Activated T-helper 2 cell treated with anti-CD3 and anti-CD28 coated beads, Interferon-gamma antibody, Interleukin-2, Interleukin-4, amounts not matched to agents 10 μg/mL and 5 μg/mL and 100 μg/mL, durations not matched to agents 14 hours and 24 hours and 36 hours (primary cell): ENCODE measurements at regions of chr6 and their contacts with region 1.

Region 1: GRCh38 chr6:45922728-45923351 is 92.8 kb downstream of the CLIC5 start:
- DNase-seq: peak; percentile 58
- H3K4me3 Mint-ChIP-seq: peak overlapping the region; percentile 53
- H3K27ac Mint-ChIP-seq: peak overlapping the region; percentile 94
- H3K4me1 Mint-ChIP-seq: peaks cover 68% of the 10 kb centered on the region
- H3K27me3 Mint-ChIP-seq: no peaks in the 10 kb centered on the region

Region 2: DNA sequence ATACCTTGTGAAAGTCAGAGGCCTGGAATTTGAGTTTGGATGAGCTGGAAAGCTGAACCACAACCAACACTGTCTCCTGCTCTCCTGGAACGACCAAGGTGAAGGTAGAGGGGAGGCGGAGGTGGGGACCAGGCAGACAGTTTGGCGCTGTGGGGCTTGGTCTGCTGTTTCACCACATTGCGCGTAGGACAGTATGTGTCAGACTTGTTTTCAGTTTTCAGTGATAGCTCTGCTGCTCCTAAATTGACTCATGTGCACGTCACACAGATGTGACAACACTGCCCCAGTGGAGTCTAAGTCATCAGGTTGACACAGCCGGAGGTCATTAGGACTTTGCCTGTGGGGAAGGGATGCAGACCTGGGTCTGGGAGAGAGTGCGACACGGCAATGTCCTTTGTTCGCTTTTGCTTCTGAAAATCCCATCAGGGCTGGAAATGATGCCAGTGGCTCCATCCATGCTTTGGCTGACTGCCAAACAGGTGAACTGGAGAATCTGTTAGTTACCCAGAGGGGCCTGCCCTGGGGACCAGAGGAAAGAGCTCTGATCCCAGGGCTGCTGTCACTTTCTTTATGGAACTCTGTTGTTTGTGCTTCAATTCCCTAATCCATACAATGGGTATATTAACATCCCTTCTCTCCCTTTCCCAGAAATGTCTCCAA is 1279.8 kb before region 1 on chr6:
- intact Hi-C with region 1: loop called (anchors 2 kb)
- DNase-seq: peak; percentile 39
- H3K4me3 Mint-ChIP-seq: no peak overlapping the region
- H3K27ac Mint-ChIP-seq: peak overlapping the region; percentile 91
- H3K4me1 Mint-ChIP-seq: peaks cover 31% of the 10 kb centered on the region
- H3K27me3 Mint-ChIP-seq: no peaks in the 10 kb centered on the region

Region 3: DNA sequence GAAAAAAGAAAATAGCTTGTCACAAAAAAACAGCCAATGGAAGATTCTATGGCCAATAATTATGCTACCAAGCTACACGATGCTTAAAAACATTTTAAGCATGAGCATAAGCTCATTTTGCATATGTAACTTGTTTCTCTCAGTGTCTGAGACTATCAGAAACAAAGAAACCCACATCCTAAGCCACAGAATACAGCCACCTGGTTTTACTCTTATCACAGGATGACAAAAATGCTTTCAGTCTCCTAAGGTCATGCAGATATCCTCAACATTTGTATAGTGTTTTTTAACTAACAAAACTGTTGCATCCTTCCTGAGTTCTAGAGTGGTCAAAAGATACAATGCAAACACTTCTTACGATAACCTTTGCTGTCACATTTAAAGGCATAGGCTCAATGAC is 766.8 kb before region 1 on chr6:
- intact Hi-C with region 1: loop called (anchors 2 kb)
- DNase-seq: peak; percentile 36
- H3K4me3 Mint-ChIP-seq: no peak overlapping the region
- H3K27ac Mint-ChIP-seq: peak overlapping the region; percentile 46
- H3K4me1 Mint-ChIP-seq: peaks cover 41% of the 10 kb centered on the region
- H3K27me3 Mint-ChIP-seq: no peaks in the 10 kb centered on the region

Region 4: DNA sequence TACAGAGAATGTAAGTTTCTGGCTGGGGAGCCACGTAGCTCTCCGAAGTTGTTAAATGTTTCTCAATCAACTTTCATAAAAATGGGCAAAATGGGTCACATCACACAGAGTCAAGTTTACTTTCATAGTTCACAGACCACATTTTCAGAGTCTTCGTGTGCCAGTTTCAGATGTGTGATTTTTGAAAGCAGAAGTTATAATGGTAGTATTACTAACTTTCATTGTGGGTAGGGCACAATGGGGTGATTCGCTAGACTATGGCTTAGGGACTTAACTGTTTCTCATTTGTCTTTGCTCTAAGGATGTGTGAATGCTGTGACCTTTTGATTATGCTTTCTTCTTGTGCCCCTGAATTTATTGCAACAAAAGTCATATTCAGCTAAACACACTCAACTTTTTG is 436.1 kb before region 1 on chr6:
- intact Hi-C with region 1: loop called (anchors 5 kb)
- DNase-seq: no peak
- H3K4me3 Mint-ChIP-seq: peak overlapping the region; percentile 20
- H3K27ac Mint-ChIP-seq: peak overlapping the region; percentile 74
- H3K4me1 Mint-ChIP-seq: peaks cover 78% of the 10 kb centered on the region
- H3K27me3 Mint-ChIP-seq: no peaks in the 10 kb centered on the region

Region 5: GRCh38 chr6:45608252-45608911 is 314.5 kb before region 1 on chr6:
- intact Hi-C with region 1: loop called (anchors 5 kb)
- DNase-seq: no peak
- H3K4me3 Mint-ChIP-seq: no peak overlapping the region
- H3K27ac Mint-ChIP-seq: peak overlapping the region; percentile 78
- H3K4me1 Mint-ChIP-seq: peaks cover 48% of the 10 kb centered on the region
- H3K27me3 Mint-ChIP-seq: no peaks in the 10 kb centered on the region

Region 6: DNA sequence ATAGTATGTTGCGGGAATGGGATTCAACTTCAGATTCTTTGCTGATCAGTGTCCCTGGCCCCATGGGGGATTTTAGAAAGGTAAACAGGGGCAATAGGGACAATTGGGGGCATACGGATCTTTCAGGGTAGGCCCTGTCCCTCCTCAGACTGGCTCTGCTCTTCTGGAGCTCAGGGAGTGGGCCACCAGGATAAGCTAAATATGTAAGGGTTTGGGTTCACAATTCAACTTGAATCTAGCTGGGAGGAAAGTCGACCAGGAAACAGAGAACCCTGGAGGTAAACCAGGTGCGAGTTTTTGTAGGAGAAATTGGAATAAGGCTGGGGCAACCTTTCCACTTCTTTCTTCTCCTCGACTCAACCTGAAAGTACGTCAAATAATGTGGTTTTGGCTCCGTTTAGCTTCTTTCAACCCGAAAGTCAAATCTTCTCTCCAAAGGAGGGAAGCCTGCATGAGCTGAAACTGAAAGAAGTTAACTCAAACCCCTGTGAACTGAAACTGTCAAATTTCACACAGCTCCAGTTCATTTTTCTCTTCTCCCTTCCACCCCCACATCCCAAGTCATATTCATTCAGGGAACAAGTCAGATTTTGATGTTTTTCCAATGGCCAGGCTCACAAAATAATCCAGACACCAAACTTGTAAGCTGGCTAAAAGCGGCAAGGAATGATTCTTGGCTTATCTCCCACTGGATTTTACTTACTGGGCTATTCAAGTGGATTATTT is 185.3 kb before region 1 on chr6:
- intact Hi-C with region 1: loop called (anchors 1 kb)
- DNase-seq: peak; percentile 35
- H3K4me3 Mint-ChIP-seq: peak overlapping the region; percentile 47
- H3K27ac Mint-ChIP-seq: peak overlapping the region; percentile 92
- H3K4me1 Mint-ChIP-seq: peaks cover 69% of the 10 kb centered on the region
- H3K27me3 Mint-ChIP-seq: no peaks in the 10 kb centered on the region

Region 7: DNA sequence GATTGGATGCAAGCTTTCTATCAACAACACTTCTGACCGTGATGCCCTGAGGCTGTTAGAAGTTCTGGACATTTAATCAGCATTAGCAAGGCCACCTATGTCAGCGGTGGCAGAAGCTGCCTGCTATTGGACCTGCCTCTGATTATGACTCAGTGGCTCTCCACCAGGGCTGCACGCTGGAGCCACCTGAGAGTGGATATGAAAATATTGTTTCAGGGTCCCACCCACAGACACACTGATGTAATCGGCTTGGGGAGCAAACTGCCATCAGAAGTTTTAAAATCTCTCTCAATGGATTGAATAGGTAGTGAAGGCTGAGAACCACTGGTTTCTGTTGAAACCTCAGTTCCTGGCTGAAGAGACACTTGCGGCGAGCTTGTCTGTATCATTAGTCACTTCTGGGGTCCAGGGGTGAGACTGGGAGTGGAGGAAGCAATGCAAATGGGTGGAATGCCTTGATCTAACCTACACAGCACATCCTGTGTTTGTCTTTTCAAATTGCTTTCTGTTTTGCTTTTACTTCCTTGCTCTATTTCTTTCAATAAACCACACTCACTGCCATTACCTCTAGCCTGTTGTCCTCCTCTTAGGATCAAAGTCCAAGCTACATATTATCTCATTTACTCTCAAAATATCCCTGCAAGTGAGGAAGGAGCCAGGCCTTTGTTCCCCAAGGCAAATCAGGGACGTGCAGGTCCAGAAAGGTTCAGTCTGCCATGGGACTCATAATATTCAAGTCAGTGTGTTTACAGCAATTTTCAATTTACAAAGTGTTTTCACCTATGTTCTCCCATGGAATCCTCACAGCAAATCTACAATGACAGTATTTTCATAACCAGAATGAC is 88.6 kb after region 1 on chr6:
- intact Hi-C with region 1: loop called (anchors 1 kb)
- DNase-seq: peak; percentile 75
- H3K4me3 Mint-ChIP-seq: peak overlapping the region; percentile 30
- H3K27ac Mint-ChIP-seq: peak overlapping the region; percentile 80
- H3K4me1 Mint-ChIP-seq: peaks cover 58% of the 10 kb centered on the region
- H3K27me3 Mint-ChIP-seq: peaks cover 24% of the 10 kb centered on the region